ENCODE measurements at regions of chr2 and their contacts with region 1.

Region 1: DNA sequence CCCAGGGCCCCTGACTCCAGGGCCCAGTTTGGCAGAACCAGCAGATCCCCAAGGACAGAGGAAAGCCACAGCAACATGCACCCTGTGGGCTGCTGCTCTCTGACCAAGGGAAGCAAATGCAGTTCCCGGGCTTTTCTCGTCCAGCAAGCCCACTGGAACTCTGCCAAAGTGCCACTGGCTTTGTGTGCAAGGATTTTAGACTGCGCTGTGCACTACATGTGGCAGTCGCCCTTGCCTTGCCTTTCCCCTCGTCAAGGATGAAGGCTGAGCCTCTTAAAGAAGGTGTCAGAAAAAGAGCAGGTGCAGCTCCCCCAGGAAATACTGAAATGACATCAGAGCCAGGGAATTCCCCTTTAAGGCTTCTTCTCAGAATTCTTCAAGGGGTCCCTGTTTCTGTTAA is 199.2 kb downstream of the TFCP2L1 start:
- DNase-seq: no peak
- H3K4me3 ChIP-seq: no peak overlapping the region
- H3K4me3 Mint-ChIP-seq: no peak overlapping the region
- H3K27ac Mint-ChIP-seq: no peak overlapping the region
- H3K4me1 ChIP-seq: no peaks in the 10 kb centered on the region
- H3K4me1 Mint-ChIP-seq: no peaks in the 10 kb centered on the region
- H3K27me3 ChIP-seq: no peaks in the 10 kb centered on the region
- H3K27me3 Mint-ChIP-seq: no peaks in the 10 kb centered on the region
- CTCF ChIP-seq: no peak

Region 2: GRCh38 chr2:121008978-121009377 is 76.8 kb before region 1 on chr2:
- CTCF ChIA-PET with region 1: no interaction called
- POLR2A ChIA-PET with region 1: no interaction called
- intact Hi-C with region 1: no loop called
- DNase-seq: peak in 1 of 2 experiments; percentile 48
- H3K4me3 ChIP-seq: no peak overlapping the region
- H3K4me3 Mint-ChIP-seq: no peak overlapping the region
- H3K27ac Mint-ChIP-seq: no peak overlapping the region
- H3K4me1 ChIP-seq: no peaks in the 10 kb centered on the region; the same call in 1 of the 2 replicates
- H3K4me1 Mint-ChIP-seq: no peaks in the 10 kb centered on the region
- H3K27me3 ChIP-seq: no peaks in the 10 kb centered on the region
- H3K27me3 Mint-ChIP-seq: no peaks in the 10 kb centered on the region
- CTCF ChIP-seq: peak; percentile 23 to 32

Region 3: GRCh38 chr2:121030523-121030922 is 55.3 kb before region 1 on chr2:
- CTCF ChIA-PET with region 1: interaction called, 13 read pairs
- POLR2A ChIA-PET with region 1: no interaction called
- intact Hi-C with region 1: no loop called
- DNase-seq: no peak
- H3K4me3 ChIP-seq: no peak overlapping the region
- H3K4me3 Mint-ChIP-seq: no peak overlapping the region
- H3K27ac Mint-ChIP-seq: no peak overlapping the region
- H3K4me1 ChIP-seq: peaks cover 6% of the 10 kb centered on the region
- H3K4me1 Mint-ChIP-seq: peaks cover 3% of the 10 kb centered on the region
- H3K27me3 ChIP-seq: peaks cover 8% of the 10 kb centered on the region
- H3K27me3 Mint-ChIP-seq: peaks cover 38% of the 10 kb centered on the region
- CTCF ChIP-seq: no peak

Region 4: DNA sequence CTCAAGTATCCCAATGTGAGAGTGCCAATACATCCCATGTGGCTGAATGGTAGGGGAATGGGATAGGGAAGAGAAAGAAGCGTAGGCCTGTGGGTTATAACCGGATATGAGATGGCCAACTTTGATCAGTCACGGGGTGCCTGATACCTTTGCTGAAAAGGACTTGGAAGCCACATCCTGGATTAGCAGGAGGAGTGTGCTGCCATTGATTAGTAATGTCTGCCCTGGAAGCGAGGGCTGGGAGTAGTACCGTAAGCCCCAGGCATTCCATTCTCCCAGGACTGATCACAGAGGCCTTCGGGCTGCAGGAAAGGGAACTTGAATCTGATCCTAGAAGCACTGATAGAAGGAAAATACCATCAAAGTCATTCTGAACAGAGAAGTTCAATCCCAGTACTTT is 19.3 kb before region 1 on chr2:
- CTCF ChIA-PET with region 1: no interaction called
- POLR2A ChIA-PET with region 1: no interaction called
- intact Hi-C with region 1: no loop called
- DNase-seq: peak in 1 of 2 experiments; percentile 15
- H3K4me3 ChIP-seq: no peak overlapping the region
- H3K4me3 Mint-ChIP-seq: no peak overlapping the region
- H3K27ac Mint-ChIP-seq: no peak overlapping the region
- H3K4me1 ChIP-seq: no peaks in the 10 kb centered on the region
- H3K4me1 Mint-ChIP-seq: no peaks in the 10 kb centered on the region
- H3K27me3 ChIP-seq: no peaks in the 10 kb centered on the region
- H3K27me3 Mint-ChIP-seq: peaks cover 3% of the 10 kb centered on the region
- CTCF ChIP-seq: no peak

Region 5: GRCh38 chr2:121197369-121198091 is 111.7 kb after region 1 on chr2:
- CTCF ChIA-PET with region 1: no interaction called
- POLR2A ChIA-PET with region 1: no interaction called
- intact Hi-C with region 1: no loop called
- DNase-seq: no peak
- H3K4me3 ChIP-seq: no peak overlapping the region
- H3K4me3 Mint-ChIP-seq: no peak overlapping the region
- H3K27ac Mint-ChIP-seq: no peak overlapping the region
- H3K4me1 ChIP-seq: no peaks in the 10 kb centered on the region
- H3K4me1 Mint-ChIP-seq: peaks cover 5% of the 10 kb centered on the region
- H3K27me3 ChIP-seq: no peaks in the 10 kb centered on the region
- H3K27me3 Mint-ChIP-seq: no peaks in the 10 kb centered on the region
- CTCF ChIP-seq: no peak

Region 6: DNA sequence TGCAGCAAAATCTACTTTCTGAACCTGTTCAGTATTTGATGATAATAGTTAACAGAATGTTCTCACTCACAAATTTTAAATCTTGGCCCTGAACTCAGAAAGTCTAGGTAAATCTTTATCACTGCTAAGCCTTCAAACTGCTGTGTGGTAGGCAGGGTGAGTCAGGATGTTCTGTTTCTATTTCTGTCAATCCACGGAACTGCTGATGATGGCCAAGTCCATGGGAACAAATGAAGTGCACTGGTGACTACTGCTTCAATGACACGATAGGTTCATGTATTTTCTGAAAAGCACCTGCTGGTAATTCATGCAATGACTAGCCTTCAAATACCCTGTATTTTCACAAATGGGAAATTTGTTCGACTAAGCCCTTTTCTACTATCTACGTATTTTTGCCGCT is 636.7 kb after region 1 on chr2:
- CTCF ChIA-PET with region 1: no interaction called
- POLR2A ChIA-PET with region 1: no interaction called
- intact Hi-C with region 1: loop called (anchors 1 kb)
- DNase-seq: no peak
- H3K4me3 ChIP-seq: no peak overlapping the region
- H3K4me3 Mint-ChIP-seq: no peak overlapping the region
- H3K27ac Mint-ChIP-seq: no peak overlapping the region
- H3K4me1 ChIP-seq: no peaks in the 10 kb centered on the region
- H3K4me1 Mint-ChIP-seq: no peaks in the 10 kb centered on the region
- H3K27me3 ChIP-seq: no peaks in the 10 kb centered on the region
- H3K27me3 Mint-ChIP-seq: no peaks in the 10 kb centered on the region
- CTCF ChIP-seq: no peak